Activated CD8-positive, alpha-beta T cell treated with anti-CD3 and anti-CD28 coated beads for 36 hours (primary cell): ENCODE measurements at regions of chr19 and their contacts with region 1.

Region 1: DNA sequence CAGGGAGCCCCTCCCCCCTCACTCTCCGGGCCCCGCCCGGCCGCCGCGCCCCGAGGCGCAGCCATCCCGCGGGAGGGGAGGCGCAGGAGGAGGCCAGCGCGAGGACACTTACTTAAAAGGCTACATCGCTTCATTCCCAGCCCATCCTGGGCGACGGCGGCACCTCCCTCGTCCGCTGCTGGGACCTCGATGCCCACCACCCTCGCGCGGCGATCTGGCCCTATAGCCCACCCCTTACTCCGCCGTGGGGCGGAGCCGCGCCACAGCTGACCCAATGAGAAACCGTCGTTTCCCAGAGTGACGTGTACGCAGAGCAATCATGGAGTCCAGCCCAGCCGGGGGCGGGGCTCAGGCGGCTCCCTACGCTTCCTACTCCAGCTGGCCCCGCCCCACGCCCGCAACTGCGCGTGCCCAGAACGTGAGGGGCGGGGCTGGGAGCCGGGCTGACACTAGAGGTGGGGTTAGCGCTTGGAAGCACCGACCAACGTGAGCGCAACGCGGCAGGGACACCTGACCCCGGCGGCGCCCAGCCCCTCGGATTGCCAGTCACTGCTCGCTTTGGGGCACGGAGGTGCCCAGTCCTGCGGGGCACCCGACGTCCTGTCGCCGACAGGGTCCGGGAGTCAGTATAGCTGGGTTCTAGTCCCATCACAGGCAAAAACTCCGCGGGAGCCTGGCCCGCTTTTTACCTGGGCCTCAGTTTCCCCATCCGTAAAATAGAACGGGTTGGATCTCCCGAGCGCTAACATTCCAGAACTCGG is at the start of gene ANKRD27:
- DNase-seq: peak; percentile 99
- ATAC-seq: peak; percentile 97
- H3K4me3 Mint-ChIP-seq: peak within 1 kb of the TSS; percentile 88
- H3K27ac Mint-ChIP-seq: peak within 1 kb of the TSS; percentile 87
- H3K4me1 Mint-ChIP-seq: peaks cover 32% of the 10 kb centered on the region
- H3K27me3 Mint-ChIP-seq: peaks cover 12% of the 10 kb centered on the region
- CTCF ChIP-seq: no peak
- total RNA-seq, gene ANKRD27: 34.2 to 41.0 TPM

Region 2: GRCh38 chr19:32691291-32691951 is 16.3 kb after region 1 on chr19 and contains the start of gene NUDT19:
- CTCF ChIA-PET with region 1: interaction called, 4 read pairs
- POLR2A ChIA-PET with region 1: interaction called, 43 read pairs
- intact Hi-C with region 1: no loop called
- DNase-seq: peak; percentile 91
- ATAC-seq: peak; percentile 83
- H3K4me3 Mint-ChIP-seq: peak within 1 kb of the TSS; percentile 82
- H3K27ac Mint-ChIP-seq: peak within 1 kb of the TSS; percentile 87
- H3K4me1 Mint-ChIP-seq: peaks cover 49% of the 10 kb centered on the region
- H3K27me3 Mint-ChIP-seq: no peaks in the 10 kb centered on the region
- CTCF ChIP-seq: no peak
- total RNA-seq, gene NUDT19: 16.1 to 17.5 TPM

Region 3: DNA sequence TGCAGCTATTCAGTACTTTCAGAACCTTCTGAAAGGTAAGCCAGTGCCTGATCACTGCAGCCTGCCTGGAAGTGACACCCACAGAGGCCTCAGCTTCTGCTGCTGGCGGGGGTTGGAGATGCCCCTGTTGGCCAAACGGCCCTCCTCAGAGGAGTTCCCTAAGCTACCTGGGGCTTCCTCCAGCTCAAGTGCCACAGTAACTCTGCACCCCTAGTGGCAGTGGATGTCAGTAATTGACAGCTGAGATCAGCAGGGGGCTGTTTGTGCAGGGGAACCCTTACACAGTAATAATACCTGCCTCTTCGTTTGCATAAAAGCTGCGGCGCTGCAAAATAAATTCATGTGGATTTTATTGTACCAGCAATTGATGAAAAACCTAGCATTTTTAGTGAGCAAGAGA is 73.4 kb after region 1 on chr19:
- CTCF ChIA-PET with region 1: no interaction called
- POLR2A ChIA-PET with region 1: no interaction called
- intact Hi-C with region 1: no loop called
- DNase-seq: peak; percentile 26
- ATAC-seq: peak; percentile 40
- H3K4me3 Mint-ChIP-seq: no peak overlapping the region
- H3K27ac Mint-ChIP-seq: no peak overlapping the region
- H3K4me1 Mint-ChIP-seq: peaks cover 14% of the 10 kb centered on the region
- H3K27me3 Mint-ChIP-seq: peaks cover 13% of the 10 kb centered on the region
- CTCF ChIP-seq: no peak